ENCODE measurements at regions of chr22 and their contacts with region 1.

Region 1: DNA sequence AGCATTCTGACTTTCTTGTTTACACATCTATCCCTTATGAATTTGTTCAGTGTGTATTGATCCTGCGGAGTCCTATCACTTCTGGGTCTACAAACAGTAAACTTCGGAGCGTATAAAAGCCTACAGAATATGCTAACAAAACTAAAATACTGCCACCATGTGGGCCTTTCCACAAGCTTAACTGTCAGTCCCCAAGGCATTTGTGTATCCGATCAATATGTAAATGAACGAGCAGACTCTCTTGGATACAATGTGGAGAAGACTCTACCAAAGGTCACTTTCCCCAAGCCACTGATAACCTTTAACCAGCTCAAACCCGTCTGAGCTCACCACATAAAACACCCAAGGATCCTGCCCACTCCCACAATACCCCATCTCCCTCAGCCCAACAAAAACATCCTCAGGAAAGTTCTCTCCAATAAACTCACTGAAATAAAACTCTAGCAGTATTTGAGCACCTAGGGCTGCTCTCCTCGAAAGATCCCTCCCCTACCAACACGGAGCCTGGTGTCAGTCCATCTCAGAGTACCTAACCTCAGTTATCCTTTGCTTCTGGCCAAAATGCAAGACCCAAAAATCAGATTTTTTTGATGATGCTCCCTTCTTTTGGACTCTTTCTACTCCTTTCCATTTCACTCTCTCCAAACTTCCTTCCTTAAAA is 17.8 kb downstream of the ADA2 start:
- DNase-seq: peak; percentile 21
- ATAC-seq: peak; percentile 48; the same call in 1 of the 2 replicates
- H3K4me3 ChIP-seq: no peak overlapping the region
- H3K27ac ChIP-seq: no peak overlapping the region
- H3K4me1 ChIP-seq: no peaks in the 10 kb centered on the region
- H3K27me3 ChIP-seq: peaks cover 7% of the 10 kb centered on the region; the same call in 1 of the 2 replicates
- CTCF ChIP-seq: peak; percentile 38; the same call in 1 of the 2 replicates

Region 2: GRCh38 chr22:17501679-17502285 is 300.4 kb after region 1 on chr22:
- CTCF ChIA-PET with region 1: interaction called, 4 read pairs
- POLR2A ChIA-PET with region 1: no interaction called
- intact Hi-C with region 1: loop called (anchors 10 kb)
- DNase-seq: peak; percentile 73
- ATAC-seq: peak; percentile 80
- H3K4me3 ChIP-seq: no peak overlapping the region
- H3K27ac ChIP-seq: no peak overlapping the region
- H3K4me1 ChIP-seq: no peaks in the 10 kb centered on the region
- H3K27me3 ChIP-seq: peaks cover 33% of the 10 kb centered on the region
- CTCF ChIP-seq: peak; percentile 69

Region 3: GRCh38 chr22:17523925-17524324 is 322.5 kb after region 1 on chr22:
- CTCF ChIA-PET with region 1: no interaction called
- POLR2A ChIA-PET with region 1: interaction called, 10 read pairs
- intact Hi-C with region 1: no loop called
- DNase-seq: no peak
- ATAC-seq: no peak
- H3K4me3 ChIP-seq: no peak overlapping the region
- H3K27ac ChIP-seq: no peak overlapping the region
- H3K4me1 ChIP-seq: peaks cover 3% of the 10 kb centered on the region; the same call in 1 of the 2 replicates
- H3K27me3 ChIP-seq: no peaks in the 10 kb centered on the region; the same call in 1 of the 2 replicates
- CTCF ChIP-seq: no peak